Endothelial cell of umbilical vein (primary cell): ENCODE measurements at regions of chr4 and their contacts with region 1.

Region 1: GRCh38 chr4:212438-213188 is 88.3 kb downstream of the ZNF718 start:
- DNase-seq: peak; percentile 88
- H3K4me3 ChIP-seq: peak overlapping the region; percentile 34 to 64 (median 56)
- H3K27ac ChIP-seq: peak overlapping the region; percentile 55
- H3K4me1 ChIP-seq: no peaks in the 10 kb centered on the region
- H3K27me3 ChIP-seq: no peaks in the 10 kb centered on the region
- CTCF ChIP-seq: no peak
- POLR2A ChIP-seq: no peak

Region 2: GRCh38 chr4:124275-125081 is 88.1 kb before region 1 on chr4 and contains the start of gene ZNF718:
- CTCF ChIA-PET with region 1: interaction called, 4 read pairs
- POLR2A ChIA-PET with region 1: no interaction called
- dilution Hi-C with region 1: no loop called
- intact Hi-C with region 1: loop called (anchors 5 kb)
- DNase-seq: peak; percentile 98
- H3K4me3 ChIP-seq: peak within 1 kb of the TSS; percentile 48 to 65 (median 62)
- H3K27ac ChIP-seq: peak within 1 kb of the TSS; percentile 44
- H3K4me1 ChIP-seq: peaks cover 7% of the 10 kb centered on the region
- H3K27me3 ChIP-seq: no peaks in the 10 kb centered on the region
- CTCF ChIP-seq: no peak
- POLR2A ChIP-seq: peak; percentile 78
- total RNA-seq, gene ZNF718: 5.1 and 12.1 TPM in 2 replicates

Region 3: GRCh38 chr4:173671-174332 is 38.8 kb before region 1 on chr4:
- CTCF ChIA-PET with region 1: no interaction called
- POLR2A ChIA-PET with region 1: no interaction called
- dilution Hi-C with region 1: no loop called
- intact Hi-C with region 1: no loop called
- DNase-seq: no peak
- H3K4me3 ChIP-seq: no peak overlapping the region
- H3K27ac ChIP-seq: no peak overlapping the region
- H3K4me1 ChIP-seq: no peaks in the 10 kb centered on the region
- H3K27me3 ChIP-seq: no peaks in the 10 kb centered on the region
- CTCF ChIP-seq: no peak
- POLR2A ChIP-seq: no peak